ENCODE measurements at regions of chr2 and their contacts with region 1.

Region 1: DNA sequence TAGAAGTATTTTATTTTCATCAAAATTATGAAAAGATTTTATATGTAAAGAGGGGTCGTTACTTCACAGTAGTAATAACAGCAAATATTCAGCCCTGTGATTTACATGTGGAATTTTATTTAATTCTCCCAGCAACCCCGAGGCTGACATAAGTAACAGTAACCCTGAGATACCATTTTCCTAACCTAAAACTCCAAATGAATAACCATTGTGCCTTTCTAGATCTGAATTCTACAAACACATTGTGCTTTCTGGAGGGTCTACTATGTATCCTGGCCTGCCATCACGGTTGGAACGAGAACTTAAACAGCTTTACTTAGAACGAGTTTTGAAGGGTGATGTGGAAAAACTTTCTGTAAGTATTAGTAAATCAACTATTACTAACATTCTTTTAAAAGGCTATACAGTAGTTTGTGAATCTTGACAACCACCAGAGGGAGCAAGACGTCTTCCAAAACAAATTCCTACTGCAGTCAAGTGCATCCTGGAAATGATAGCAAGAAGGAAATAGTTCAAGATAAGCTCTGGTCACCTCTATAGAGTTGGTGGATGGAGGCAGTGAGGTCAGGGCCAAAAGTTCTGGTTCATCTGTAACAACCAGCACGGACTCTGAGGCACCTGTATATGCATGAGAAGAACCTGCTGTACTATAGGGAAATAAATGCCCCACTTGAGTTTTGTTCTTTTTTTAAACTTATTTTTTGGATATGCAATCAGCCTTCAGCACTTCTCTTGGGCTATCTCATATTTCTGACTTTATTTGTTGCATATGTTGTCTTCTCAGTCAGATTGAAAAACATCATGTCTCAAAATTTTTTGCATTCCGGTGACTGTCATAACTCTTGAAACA is 37.4 kb downstream of the ACTR2 start:
- DNase-seq: peak; percentile 15 to 40 (median 24)
- H3K4me3 ChIP-seq: no peak overlapping the region
- H3K4me3 Mint-ChIP-seq: no peak overlapping the region
- H3K27ac ChIP-seq: no peak overlapping the region
- H3K27ac Mint-ChIP-seq: peak overlapping the region in 1 of 7 donors; percentile 21
- H3K4me1 ChIP-seq: no peaks in the 10 kb centered on the region
- H3K4me1 Mint-ChIP-seq: no peaks in the 10 kb centered on the region
- H3K27me3 ChIP-seq: no peaks in the 10 kb centered on the region
- H3K27me3 Mint-ChIP-seq: peaks cover 0 to 2% (median 0%) of the 10 kb centered on the region in 3 donors
- CTCF ChIP-seq: peak; percentile 81

Region 2: DNA sequence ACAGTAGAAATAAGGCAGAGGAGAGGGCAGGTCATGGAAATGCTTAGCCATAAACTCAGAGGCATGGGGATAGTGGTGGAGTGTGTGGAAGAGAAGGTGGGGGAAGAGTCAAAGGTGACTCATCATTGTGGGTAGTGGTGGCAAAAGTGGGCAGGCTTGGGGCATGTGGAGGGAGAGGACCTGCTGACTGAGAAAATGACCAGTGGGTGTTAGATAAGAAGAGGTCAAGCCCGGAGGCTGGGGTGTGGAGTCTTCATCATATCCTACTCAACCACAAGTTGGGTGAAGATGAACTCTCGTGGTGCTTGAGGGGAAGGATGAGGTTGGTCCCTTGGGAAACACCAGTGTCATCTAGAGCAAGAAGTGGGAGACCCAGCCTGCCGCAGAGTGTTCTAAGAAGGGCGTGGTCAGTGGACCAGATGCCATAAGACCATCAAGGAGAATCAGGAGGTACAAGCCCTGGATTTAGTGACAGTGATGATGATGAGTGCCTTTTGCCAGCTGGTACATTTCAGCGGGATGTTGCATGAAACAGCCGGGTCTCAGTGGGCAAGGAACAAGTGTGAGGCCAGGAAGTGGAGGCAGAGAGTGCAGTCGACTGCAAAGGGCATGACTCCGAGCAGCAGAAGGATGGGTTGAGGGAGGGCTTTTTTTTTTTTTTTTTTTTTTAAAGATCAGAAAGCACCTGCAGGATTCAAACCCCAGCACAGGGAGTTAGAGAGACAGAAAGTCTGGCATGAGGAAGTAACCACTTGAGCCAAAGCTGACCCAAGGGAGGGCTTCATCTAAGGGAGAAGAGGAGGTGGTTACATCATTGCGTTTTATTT is 289.9 kb after region 1 on chr2:
- intact Hi-C with region 1: loop called (anchors 5 to 10 kb)
- DNase-seq: peak in 2 of 3 donors; percentile 4 to 19
- H3K4me3 ChIP-seq: no peak overlapping the region
- H3K4me3 Mint-ChIP-seq: no peak overlapping the region
- H3K27ac ChIP-seq: no peak overlapping the region
- H3K27ac Mint-ChIP-seq: peak overlapping the region in 2 of 7 donors; percentile 9 to 26
- H3K4me1 ChIP-seq: no peaks in the 10 kb centered on the region
- H3K4me1 Mint-ChIP-seq: peaks cover 13% of the 10 kb centered on the region
- H3K27me3 ChIP-seq: no peaks in the 10 kb centered on the region
- H3K27me3 Mint-ChIP-seq: peaks cover 0 to 6% (median 6%) of the 10 kb centered on the region in 3 donors
- CTCF ChIP-seq: no peak

Region 3: GRCh38 chr2:65576861-65577601 is 312.0 kb after region 1 on chr2:
- intact Hi-C with region 1: loop called (anchors 5 kb)
- DNase-seq: no peak
- H3K4me3 ChIP-seq: no peak overlapping the region
- H3K4me3 Mint-ChIP-seq: no peak overlapping the region
- H3K27ac ChIP-seq: no peak overlapping the region
- H3K27ac Mint-ChIP-seq: peak overlapping the region in 2 of 7 donors; percentile 12 to 78
- H3K4me1 ChIP-seq: peaks cover 7 to 8% of the 10 kb centered on the region in 2 donors
- H3K4me1 Mint-ChIP-seq: peaks cover 13% of the 10 kb centered on the region
- H3K27me3 ChIP-seq: no peaks in the 10 kb centered on the region
- H3K27me3 Mint-ChIP-seq: peaks cover 0 to 10% (median 3%) of the 10 kb centered on the region in 3 donors
- CTCF ChIP-seq: no peak

Measured in CD14-positive monocyte (primary cell).